Activated naive CD4-positive, alpha-beta T cell treated with anti-CD3 and anti-CD28 coated beads for 36 hours (primary cell): ENCODE measurements at regions of chr17 and their contacts with region 1.

Region 1: DNA sequence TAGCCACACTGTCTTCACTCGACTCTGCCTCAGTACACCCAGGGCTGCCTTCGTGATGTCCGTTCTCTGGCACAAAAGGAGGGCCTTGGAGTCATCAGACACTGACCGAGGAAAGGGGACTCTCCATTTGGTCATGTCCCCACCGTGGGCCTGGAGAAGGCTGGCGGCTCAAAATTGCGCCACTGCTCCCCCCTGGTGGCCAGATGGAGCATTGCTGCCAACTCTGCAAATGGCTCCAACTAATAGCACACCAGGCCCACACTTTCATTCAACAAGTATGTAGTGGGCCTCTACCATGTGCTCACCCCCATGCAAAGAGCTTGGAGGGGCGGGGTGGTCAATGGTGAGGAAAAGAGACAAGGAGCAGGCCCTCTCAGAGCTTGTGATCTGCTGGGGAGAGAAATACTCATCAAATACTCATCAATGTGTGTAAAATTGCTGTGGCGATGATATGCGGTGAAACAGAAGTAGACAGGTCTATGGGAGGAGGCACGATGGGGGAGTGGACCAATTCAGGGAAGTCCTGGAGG is 5.2 kb upstream of the GRIN2C start:
- DNase-seq: peak; percentile 78
- H3K4me3 Mint-ChIP-seq: no peak overlapping the region
- H3K27ac Mint-ChIP-seq: no peak overlapping the region
- H3K4me1 Mint-ChIP-seq: peaks cover 15% of the 10 kb centered on the region
- H3K27me3 Mint-ChIP-seq: peaks cover 18% of the 10 kb centered on the region

Region 2: DNA sequence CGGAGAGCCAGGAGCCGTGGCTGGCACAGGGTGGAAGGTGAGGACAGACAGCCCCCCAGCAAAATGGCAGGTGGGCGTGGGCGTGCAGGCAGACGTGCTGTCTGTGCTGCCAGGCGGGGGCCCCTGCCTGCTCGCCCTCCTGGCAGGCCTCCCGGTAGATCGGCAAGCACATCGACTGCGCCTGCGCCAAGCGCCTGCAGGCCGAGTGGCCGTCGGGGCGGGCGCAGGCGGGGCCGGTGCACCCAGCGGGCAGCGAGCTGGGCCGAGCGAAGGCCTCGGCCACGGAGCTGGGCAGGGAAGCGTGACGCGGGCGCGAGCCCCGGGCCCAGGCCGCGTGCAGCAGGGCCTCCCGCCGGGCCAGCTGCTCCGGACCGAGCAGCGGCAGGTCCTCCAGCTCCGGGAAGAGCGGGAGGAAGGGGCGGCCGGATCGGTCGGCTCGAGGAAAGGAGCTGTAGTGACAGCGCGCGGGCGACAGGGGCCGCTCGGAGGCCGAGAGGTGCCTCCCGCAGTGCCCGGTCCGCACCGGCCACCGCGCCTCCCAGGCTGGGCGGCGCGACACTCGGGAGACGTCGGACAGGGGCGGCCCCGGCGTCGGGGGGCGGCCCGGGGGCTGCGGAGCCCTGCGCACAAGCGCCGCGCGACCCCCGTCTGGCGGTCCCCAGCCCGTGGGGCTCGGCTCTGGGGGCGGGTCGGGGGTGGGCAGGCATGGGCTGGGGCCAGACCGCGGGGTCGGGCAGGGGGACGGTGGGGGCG is 22.2 kb before region 1 on chr17:
- CTCF ChIA-PET with region 1: interaction called, 12 read pairs
- intact Hi-C with region 1: loop called (anchors 1 kb)
- DNase-seq: no peak
- H3K4me3 Mint-ChIP-seq: no peak overlapping the region
- H3K27ac Mint-ChIP-seq: no peak overlapping the region
- H3K4me1 Mint-ChIP-seq: peaks cover 13% of the 10 kb centered on the region
- H3K27me3 Mint-ChIP-seq: peaks cover 10% of the 10 kb centered on the region

Region 3: GRCh38 chr17:74852237-74853047 is 12.5 kb before region 1 on chr17:
- CTCF ChIA-PET with region 1: interaction called, 12 read pairs
- intact Hi-C with region 1: no loop called
- DNase-seq: peak; percentile 64
- H3K4me3 Mint-ChIP-seq: peak overlapping the region; percentile 71
- H3K27ac Mint-ChIP-seq: no peak overlapping the region
- H3K4me1 Mint-ChIP-seq: peaks cover 3% of the 10 kb centered on the region
- H3K27me3 Mint-ChIP-seq: peaks cover 43% of the 10 kb centered on the region

Region 4: GRCh38 chr17:74951065-74951464 is 86.1 kb after region 1 on chr17:
- CTCF ChIA-PET with region 1: no interaction called
- intact Hi-C with region 1: no loop called
- DNase-seq: no peak
- H3K4me3 Mint-ChIP-seq: no peak overlapping the region
- H3K27ac Mint-ChIP-seq: no peak overlapping the region
- H3K4me1 Mint-ChIP-seq: no peaks in the 10 kb centered on the region
- H3K27me3 Mint-ChIP-seq: no peaks in the 10 kb centered on the region

Region 5: GRCh38 chr17:74968361-74968853 is 103.5 kb after region 1 on chr17:
- CTCF ChIA-PET with region 1: no interaction called
- intact Hi-C with region 1: no loop called
- DNase-seq: no peak
- H3K4me3 Mint-ChIP-seq: no peak overlapping the region
- H3K27ac Mint-ChIP-seq: no peak overlapping the region
- H3K4me1 Mint-ChIP-seq: peaks cover 9% of the 10 kb centered on the region
- H3K27me3 Mint-ChIP-seq: peaks cover 6% of the 10 kb centered on the region